HepG2 (cell line): ENCODE measurements at regions of chr15 and their contacts with region 1.

Region 1: DNA sequence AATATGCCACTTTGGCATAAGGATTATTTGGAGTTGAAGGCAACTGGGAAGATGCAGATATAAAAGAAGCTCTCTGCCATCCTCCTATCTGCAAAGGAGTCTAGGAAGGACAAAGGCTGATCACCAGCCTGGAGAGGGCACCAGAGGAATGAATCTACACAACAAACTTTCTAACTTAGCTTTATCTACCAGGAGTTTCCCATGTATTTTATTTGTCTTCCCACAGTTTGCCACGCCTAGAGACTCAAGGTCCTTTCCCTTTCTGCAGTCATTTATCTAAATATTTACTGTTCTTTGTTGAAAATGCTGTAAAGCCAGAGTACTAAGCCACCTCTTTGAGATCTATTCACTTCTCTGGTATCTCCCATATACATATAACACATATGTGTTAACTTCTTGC is 32.2 kb downstream of the GPR176 start:
- DNase-seq: peak; percentile 78
- ATAC-seq: peak; percentile 94
- H3K4me3 ChIP-seq: no peak overlapping the region
- H3K27ac ChIP-seq: no peak overlapping the region
- H3K4me1 ChIP-seq: peaks cover 47% of the 10 kb centered on the region
- H3K27me3 ChIP-seq: 0 out of 5 replicates have a peak, but pooled peaks cover 0 to 2% of the 10 kb centered on the region in 2 experiments
- CTCF ChIP-seq: peak; percentile 71
- EP300 ChIP-seq: peak in 1 of 2 experiments; percentile 31; a peak in 1 of 4 replicates
- POLR2A ChIP-seq: no peak
- RAD21 ChIP-seq: 0 out of 2 replicates have a peak, but pooled peaks have one; percentile 7

Region 2: GRCh38 chr15:38905634-38906033 is 982.2 kb before region 1 on chr15:
- CTCF ChIA-PET with region 1: no interaction called
- POLR2A ChIA-PET with region 1: no interaction called
- in situ Hi-C with region 1: no loop called
- intact Hi-C with region 1: no loop called
- DNase-seq: no peak
- ATAC-seq: no peak
- H3K4me3 ChIP-seq: no peak overlapping the region
- H3K27ac ChIP-seq: no peak overlapping the region
- H3K4me1 ChIP-seq: no peaks in the 10 kb centered on the region
- H3K27me3 ChIP-seq: no peaks in the 10 kb centered on the region; a peak in 1 of 5 replicates
- CTCF ChIP-seq: no peak
- EP300 ChIP-seq: no peak
- POLR2A ChIP-seq: no peak
- RAD21 ChIP-seq: no peak

Region 3: GRCh38 chr15:39898317-39898716 is 10.5 kb after region 1 on chr15:
- CTCF ChIA-PET with region 1: no interaction called
- POLR2A ChIA-PET with region 1: no interaction called
- in situ Hi-C with region 1: no loop called
- intact Hi-C with region 1: no loop called
- DNase-seq: no peak
- ATAC-seq: no peak
- H3K4me3 ChIP-seq: no peak overlapping the region
- H3K27ac ChIP-seq: no peak overlapping the region
- H3K4me1 ChIP-seq: no peaks in the 10 kb centered on the region
- H3K27me3 ChIP-seq: peaks cover 2 to 4% of the 10 kb centered on the region in 2 experiments; a peak in 1 of 5 replicates
- CTCF ChIP-seq: no peak
- EP300 ChIP-seq: no peak
- POLR2A ChIP-seq: no peak
- RAD21 ChIP-seq: no peak

Region 4: DNA sequence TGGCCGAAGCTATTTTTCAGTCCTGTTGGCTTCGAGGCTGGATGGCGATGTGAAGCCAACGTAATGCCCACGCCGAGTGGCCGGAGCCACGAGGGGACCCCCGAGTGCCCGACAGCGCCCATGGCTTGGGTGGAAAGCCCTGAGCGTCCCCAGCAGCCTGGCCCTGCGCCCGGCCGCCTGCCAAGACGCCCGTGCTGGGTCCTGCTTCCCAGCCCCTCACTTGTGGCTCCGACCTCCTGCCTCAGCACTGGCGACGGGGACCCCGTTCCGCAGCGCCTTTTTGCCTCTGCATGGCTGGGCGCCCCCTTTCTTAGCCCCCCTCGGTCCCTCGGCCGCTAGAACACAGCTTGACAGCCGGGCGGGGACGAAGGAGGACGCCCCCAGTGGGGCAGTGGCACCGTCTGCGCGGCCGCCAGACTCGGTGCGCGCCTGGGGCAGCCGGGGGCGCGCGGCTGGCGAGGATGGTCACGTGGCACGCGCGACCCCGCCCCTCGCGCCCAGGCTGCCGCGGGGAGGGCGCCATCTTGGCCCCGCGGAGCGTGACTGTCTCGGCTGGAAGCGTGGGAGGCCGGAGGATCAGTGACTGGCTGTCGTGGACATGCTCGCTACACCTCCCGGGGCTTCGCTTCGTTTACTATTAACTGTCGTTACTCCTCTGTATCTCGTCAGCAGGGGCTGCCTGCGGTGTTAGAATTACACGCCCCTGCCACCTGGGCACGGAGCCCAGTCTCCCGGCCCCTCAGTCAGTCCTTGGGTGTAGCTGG is 32.9 kb after region 1 on chr15:
- CTCF ChIA-PET with region 1: no interaction called
- POLR2A ChIA-PET with region 1: no interaction called
- in situ Hi-C with region 1: no loop called
- intact Hi-C with region 1: loop called (anchors 5 kb)
- DNase-seq: peak; percentile 11
- ATAC-seq: peak; percentile 84
- H3K4me3 ChIP-seq: peak overlapping the region; percentile 54 to 71 (median 60)
- H3K27ac ChIP-seq: no peak overlapping the region
- H3K4me1 ChIP-seq: peaks cover 19% of the 10 kb centered on the region
- H3K27me3 ChIP-seq: peaks cover 2 to 21% of the 10 kb centered on the region in 2 experiments; a peak in 3 of 5 replicates
- CTCF ChIP-seq: peak; percentile 16; the same call in 1 of the 2 replicates
- EP300 ChIP-seq: no peak
- POLR2A ChIP-seq: peak in 1 of 2 experiments; percentile 82; a peak in 2 of 4 replicates
- RAD21 ChIP-seq: peak; percentile 14; the same call in 1 of the 2 replicates

Region 5: GRCh38 chr15:39976291-39977274 is 88.8 kb after region 1 on chr15:
- CTCF ChIA-PET with region 1: no interaction called
- POLR2A ChIA-PET with region 1: no interaction called
- in situ Hi-C with region 1: no loop called
- intact Hi-C with region 1: loop called (anchors 10 kb)
- DNase-seq: peak; percentile 21
- ATAC-seq: peak; percentile 94
- H3K4me3 ChIP-seq: peak overlapping the region; percentile 23 to 56 (median 40); a peak in 4 of 6 replicates
- H3K27ac ChIP-seq: peak overlapping the region; percentile 53
- H3K4me1 ChIP-seq: peaks cover 34% of the 10 kb centered on the region
- H3K27me3 ChIP-seq: no peaks in the 10 kb centered on the region
- CTCF ChIP-seq: peak; percentile 61
- EP300 ChIP-seq: no peak
- POLR2A ChIP-seq: no peak
- RAD21 ChIP-seq: no peak

Region 6: DNA sequence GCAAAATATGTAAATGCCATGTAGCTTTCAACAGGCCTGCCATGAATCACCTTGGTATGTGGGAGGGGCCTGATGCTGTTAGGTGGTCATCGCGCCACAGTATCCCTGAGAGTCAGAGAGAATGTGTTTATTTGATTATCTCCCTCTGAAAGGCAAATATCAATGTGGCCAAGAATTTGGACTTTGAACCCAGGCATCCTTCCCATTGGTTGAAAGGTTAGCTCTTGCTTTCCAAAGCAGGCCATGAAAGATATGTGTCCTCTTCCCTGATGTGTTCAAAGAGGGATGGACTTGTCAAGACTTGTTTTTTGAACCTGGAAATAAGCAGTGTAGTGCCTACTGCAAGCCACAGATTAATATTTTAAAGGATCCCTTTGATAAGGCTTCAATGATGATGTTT is 114.5 kb after region 1 on chr15:
- CTCF ChIA-PET with region 1: no interaction called
- POLR2A ChIA-PET with region 1: interaction called, 21 read pairs
- in situ Hi-C with region 1: no loop called
- intact Hi-C with region 1: no loop called
- DNase-seq: peak; percentile 99
- ATAC-seq: peak; percentile 99
- H3K4me3 ChIP-seq: peak overlapping the region; percentile 52 to 63 (median 57); a peak in 5 of 6 replicates
- H3K27ac ChIP-seq: peak overlapping the region; percentile 89
- H3K4me1 ChIP-seq: peaks cover 57% of the 10 kb centered on the region
- H3K27me3 ChIP-seq: no peaks in the 10 kb centered on the region
- CTCF ChIP-seq: 0 out of 2 replicates have a peak, but pooled peaks have one; percentile 3
- EP300 ChIP-seq: peak in 1 of 2 experiments; percentile 83; a peak in 2 of 4 replicates
- POLR2A ChIP-seq: peak; percentile 47 to 65; a peak in 3 of 4 replicates
- RAD21 ChIP-seq: peak; percentile 24; the same call in 1 of the 2 replicates